B cell (primary cell): ENCODE measurements at regions of chr7 and their contacts with region 1.

Region 1: GRCh38 chr7:128904381-128905197 is 5.9 kb downstream of the KCP start:
- DNase-seq: peak; percentile 84
- ATAC-seq: peak; percentile 89
- H3K4me3 ChIP-seq: no peak overlapping the region
- H3K4me3 Mint-ChIP-seq: no peak overlapping the region
- H3K27ac ChIP-seq: no peak overlapping the region
- H3K27ac Mint-ChIP-seq: no peak overlapping the region
- H3K4me1 ChIP-seq: peaks cover 3 to 9% of the 10 kb centered on the region in 2 donors
- H3K4me1 Mint-ChIP-seq: peaks cover 11% of the 10 kb centered on the region
- H3K27me3 ChIP-seq: peaks cover 0 to 15% (median 5%) of the 10 kb centered on the region in 4 experiments
- H3K27me3 Mint-ChIP-seq: peaks cover 20% of the 10 kb centered on the region
- CTCF ChIP-seq: peak; percentile 85

Region 2: GRCh38 chr7:128791121-128791961 is 113.2 kb before region 1 on chr7:
- CTCF ChIA-PET with region 1: no interaction called
- POLR2A ChIA-PET with region 1: no interaction called
- intact Hi-C with region 1: no loop called
- DNase-seq: peak; percentile 83
- ATAC-seq: peak; percentile 89
- H3K4me3 ChIP-seq: peak overlapping the region; percentile 38 to 87 (median 71)
- H3K4me3 Mint-ChIP-seq: peak overlapping the region; percentile 84
- H3K27ac ChIP-seq: no peak overlapping the region
- H3K27ac Mint-ChIP-seq: no peak overlapping the region
- H3K4me1 ChIP-seq: peaks cover 9 to 15% of the 10 kb centered on the region in 2 donors
- H3K4me1 Mint-ChIP-seq: peaks cover 9% of the 10 kb centered on the region
- H3K27me3 ChIP-seq: no peaks in the 10 kb centered on the region
- H3K27me3 Mint-ChIP-seq: no peaks in the 10 kb centered on the region
- CTCF ChIP-seq: no peak

Region 3: DNA sequence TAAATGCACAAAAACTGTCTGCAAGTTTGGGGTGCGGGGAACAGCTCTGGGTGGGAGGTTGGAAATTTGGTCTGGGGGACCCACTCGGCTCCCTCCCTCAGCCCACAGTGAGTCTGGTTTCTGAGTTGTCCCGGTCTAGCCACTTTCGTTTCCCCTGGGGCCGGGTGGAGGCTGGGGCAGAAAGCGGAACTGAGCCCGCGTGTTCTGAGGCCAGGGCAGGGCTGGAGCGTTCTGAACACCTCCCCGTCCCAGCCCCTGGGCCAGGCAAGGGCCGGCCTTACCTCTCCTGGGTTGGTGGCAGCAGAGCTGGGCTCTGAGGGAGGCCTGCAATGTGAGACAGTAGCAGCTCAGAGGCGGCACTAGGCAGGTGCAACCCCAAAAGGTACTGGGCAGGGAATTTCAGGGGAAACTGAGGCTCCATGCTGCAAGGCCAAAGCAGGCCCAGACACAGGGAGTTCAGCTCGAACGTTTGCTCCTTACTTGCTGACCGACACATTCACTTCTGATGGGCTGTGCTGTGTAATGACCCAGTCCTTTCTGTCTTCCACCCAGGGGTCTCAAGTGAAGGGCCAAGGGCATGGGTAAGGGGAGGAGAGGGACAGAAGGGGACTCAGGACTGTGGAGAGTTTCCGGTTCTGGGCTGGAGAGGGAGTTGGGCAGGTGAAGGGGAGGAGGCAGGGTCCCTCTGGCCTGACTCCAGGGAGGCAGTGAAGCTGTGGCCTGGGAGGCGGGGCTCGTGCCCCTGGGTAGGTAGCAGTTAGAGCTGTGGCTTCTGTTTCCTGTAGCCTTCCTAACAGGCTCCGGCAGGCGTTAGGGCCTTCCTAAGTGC is 36.1 kb after region 1 on chr7:
- CTCF ChIA-PET with region 1: interaction called, 3 read pairs
- POLR2A ChIA-PET with region 1: no interaction called
- intact Hi-C with region 1: loop called (anchors 2 kb)
- DNase-seq: peak; percentile 91
- ATAC-seq: peak; percentile 72
- H3K4me3 ChIP-seq: peak overlapping the region; percentile 40 to 90 (median 84)
- H3K4me3 Mint-ChIP-seq: peak overlapping the region; percentile 94
- H3K27ac ChIP-seq: peak overlapping the region; percentile 89 to 99
- H3K27ac Mint-ChIP-seq: peak overlapping the region; percentile 97
- H3K4me1 ChIP-seq: peaks cover 31 to 44% of the 10 kb centered on the region in 2 donors
- H3K4me1 Mint-ChIP-seq: peaks cover 56% of the 10 kb centered on the region
- H3K27me3 ChIP-seq: no peaks in the 10 kb centered on the region
- H3K27me3 Mint-ChIP-seq: no peaks in the 10 kb centered on the region
- CTCF ChIP-seq: no peak

Region 4: GRCh38 chr7:128954830-128955802 is 50.5 kb after region 1 on chr7:
- CTCF ChIA-PET with region 1: interaction called, 4 read pairs
- POLR2A ChIA-PET with region 1: no interaction called
- intact Hi-C with region 1: loop called (anchors 2 kb)
- DNase-seq: peak; percentile 82
- ATAC-seq: peak; percentile 85
- H3K4me3 ChIP-seq: peak overlapping the region in 4 of 5 experiments; percentile 4 to 56 (median 33)
- H3K4me3 Mint-ChIP-seq: peak overlapping the region; percentile 80
- H3K27ac ChIP-seq: peak overlapping the region; percentile 85 to 92
- H3K27ac Mint-ChIP-seq: peak overlapping the region; percentile 95
- H3K4me1 ChIP-seq: peaks cover 17 to 21% of the 10 kb centered on the region in 2 donors
- H3K4me1 Mint-ChIP-seq: peaks cover 49% of the 10 kb centered on the region
- H3K27me3 ChIP-seq: no peaks in the 10 kb centered on the region
- H3K27me3 Mint-ChIP-seq: no peaks in the 10 kb centered on the region
- CTCF ChIP-seq: peak; percentile 48

Region 5: GRCh38 chr7:128963327-128963757 is 58.8 kb after region 1 on chr7:
- CTCF ChIA-PET with region 1: interaction called, 6 read pairs
- POLR2A ChIA-PET with region 1: no interaction called
- intact Hi-C with region 1: loop called (anchors 1 kb)
- DNase-seq: peak; percentile 87
- ATAC-seq: peak; percentile 95
- H3K4me3 ChIP-seq: peak overlapping the region in 1 of 5 experiments; percentile 36
- H3K4me3 Mint-ChIP-seq: peak overlapping the region; percentile 74
- H3K27ac ChIP-seq: peak overlapping the region; percentile 80 to 92
- H3K27ac Mint-ChIP-seq: peak overlapping the region; percentile 91
- H3K4me1 ChIP-seq: peaks cover 16% of the 10 kb centered on the region in 2 donors
- H3K4me1 Mint-ChIP-seq: peaks cover 27% of the 10 kb centered on the region
- H3K27me3 ChIP-seq: no peaks in the 10 kb centered on the region
- H3K27me3 Mint-ChIP-seq: no peaks in the 10 kb centered on the region
- CTCF ChIP-seq: no peak

Region 6: DNA sequence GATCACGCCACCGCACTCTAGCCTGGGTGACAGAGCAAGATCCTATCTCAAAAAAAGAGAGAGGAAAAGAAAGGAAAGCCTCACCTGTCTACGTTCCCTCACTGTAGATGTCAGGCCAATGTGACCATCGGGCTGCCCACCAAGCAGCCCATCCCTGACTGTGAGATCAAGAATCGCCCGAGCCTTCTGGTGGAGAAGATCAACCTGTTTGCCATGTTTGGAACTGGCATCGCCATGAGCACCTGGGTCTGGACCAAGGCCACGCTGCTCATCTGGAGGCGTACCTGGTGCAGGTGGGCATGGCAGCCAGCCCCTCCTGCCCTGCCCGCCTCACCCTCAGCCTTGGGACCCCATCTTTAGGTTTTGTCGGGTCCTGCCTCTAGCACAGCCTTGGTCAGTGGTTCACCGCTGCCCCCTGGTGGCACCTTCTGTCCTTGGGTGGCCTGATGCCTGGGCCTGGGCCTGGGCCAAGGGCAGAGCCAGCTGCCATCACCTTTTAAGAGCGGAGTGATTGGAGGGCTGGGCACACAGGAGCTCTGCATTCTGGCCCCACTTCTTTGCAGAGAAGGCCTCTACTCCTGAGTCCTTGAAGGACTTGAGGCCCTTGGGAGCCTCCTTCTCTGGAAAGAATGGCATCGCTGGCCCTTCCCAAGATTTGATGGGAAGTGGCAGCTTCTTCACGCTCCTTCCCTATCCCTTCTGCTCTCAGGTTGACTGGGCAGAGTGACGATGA is 305.8 kb after region 1 on chr7:
- CTCF ChIA-PET with region 1: interaction called, 17 read pairs
- POLR2A ChIA-PET with region 1: no interaction called
- intact Hi-C with region 1: no loop called
- DNase-seq: peak; percentile 82
- ATAC-seq: peak; percentile 90
- H3K4me3 ChIP-seq: no peak overlapping the region
- H3K4me3 Mint-ChIP-seq: no peak overlapping the region
- H3K27ac ChIP-seq: no peak overlapping the region
- H3K27ac Mint-ChIP-seq: no peak overlapping the region
- H3K4me1 ChIP-seq: no peaks in the 10 kb centered on the region
- H3K4me1 Mint-ChIP-seq: peaks cover 3% of the 10 kb centered on the region
- H3K27me3 ChIP-seq: no peaks in the 10 kb centered on the region
- H3K27me3 Mint-ChIP-seq: no peaks in the 10 kb centered on the region
- CTCF ChIP-seq: peak; percentile 84

Region 7: DNA sequence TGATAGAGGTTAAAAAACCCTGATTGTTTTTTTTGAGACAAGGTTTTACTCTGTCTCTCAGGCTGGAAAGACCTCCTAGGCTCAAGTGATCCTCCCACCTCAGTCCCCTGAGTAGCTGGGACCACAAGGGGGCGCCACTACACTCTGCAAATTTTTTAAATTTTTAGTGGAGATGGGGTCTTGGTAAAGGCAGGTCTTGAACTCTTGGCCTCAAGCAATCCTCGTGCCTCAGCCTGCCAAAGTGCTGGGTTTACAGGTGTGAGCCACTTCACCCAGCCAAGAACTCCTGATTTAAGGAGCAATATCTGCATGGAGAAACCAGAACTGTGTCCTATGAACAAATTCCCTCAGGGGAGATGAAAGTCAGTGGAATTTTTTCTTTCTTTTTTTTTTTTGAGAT is 1158.4 kb after region 1 on chr7:
- CTCF ChIA-PET with region 1: no interaction called
- POLR2A ChIA-PET with region 1: no interaction called
- intact Hi-C with region 1: no loop called
- DNase-seq: peak; percentile 68
- ATAC-seq: peak; percentile 36
- H3K4me3 ChIP-seq: no peak overlapping the region
- H3K4me3 Mint-ChIP-seq: no peak overlapping the region
- H3K27ac ChIP-seq: no peak overlapping the region
- H3K27ac Mint-ChIP-seq: no peak overlapping the region
- H3K4me1 ChIP-seq: no peaks in the 10 kb centered on the region
- H3K4me1 Mint-ChIP-seq: no peaks in the 10 kb centered on the region
- H3K27me3 ChIP-seq: peaks cover 0 to 4% (median 0%) of the 10 kb centered on the region in 4 experiments
- H3K27me3 Mint-ChIP-seq: peaks cover 4% of the 10 kb centered on the region
- CTCF ChIP-seq: peak; percentile 75